ENCODE measurements at regions of chr11 and their contacts with region 1.

Region 1: GRCh38 chr11:58513747-58514367 is 6.0 kb upstream of the OR5B21 start:
- DNase-seq: peak; percentile 51
- ATAC-seq: peak; percentile 87
- H3K4me3 ChIP-seq: no peak overlapping the region
- H3K27ac ChIP-seq: no peak overlapping the region
- H3K4me1 ChIP-seq: peaks cover 12% of the 10 kb centered on the region
- H3K27me3 ChIP-seq: peaks cover 0 to 5% of the 10 kb centered on the region in 2 experiments; a peak in 1 of 5 replicates
- CTCF ChIP-seq: peak; percentile 82
- EP300 ChIP-seq: no peak
- POLR2A ChIP-seq: no peak
- RAD21 ChIP-seq: peak; percentile 37; the same call in 1 of the 2 replicates

Region 2: DNA sequence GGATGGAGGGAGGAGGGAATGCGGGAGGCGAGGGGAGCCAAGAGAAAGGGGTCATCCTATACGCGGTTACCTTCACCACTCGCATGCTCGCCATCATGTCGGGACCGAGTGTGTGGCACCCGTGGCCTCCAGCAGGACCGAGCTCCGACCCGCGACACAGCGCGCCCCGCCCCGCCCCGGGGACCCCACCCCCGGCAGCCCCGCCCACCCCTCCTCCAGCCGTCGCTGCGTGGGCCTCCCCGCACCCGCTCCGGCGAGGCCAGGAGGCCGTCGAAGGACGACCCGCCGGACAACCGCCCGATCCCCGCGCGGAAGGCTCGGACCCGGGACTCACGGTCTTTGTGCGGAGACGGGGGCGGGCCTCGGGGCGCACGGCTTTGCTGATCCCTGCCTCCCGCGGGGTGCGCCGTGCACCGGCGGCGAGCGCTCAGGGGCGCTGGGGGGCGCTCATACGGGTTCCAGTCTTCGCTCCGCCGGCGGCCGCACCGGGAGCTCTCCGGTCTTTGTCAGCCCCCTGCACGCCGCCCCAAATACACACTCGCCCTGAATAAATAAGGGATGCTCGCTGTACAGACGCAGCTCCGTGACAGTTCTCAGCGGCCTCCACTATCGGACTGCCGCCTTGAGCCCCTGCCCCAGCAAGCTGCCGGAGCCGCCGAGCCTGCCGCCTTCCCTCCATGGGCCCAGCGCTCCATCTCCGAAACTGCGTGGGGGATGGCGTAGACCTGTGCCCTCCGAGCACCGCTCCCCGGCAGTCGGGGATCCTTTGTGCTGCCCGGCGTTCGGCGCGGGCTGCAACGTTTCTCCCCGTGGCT is 946.1 kb before region 1 on chr11 and contains the start of gene UBE2L6:
- CTCF ChIA-PET with region 1: no interaction called
- POLR2A ChIA-PET with region 1: no interaction called
- in situ Hi-C with region 1: loop called (anchors 10 kb)
- intact Hi-C with region 1: no loop called
- DNase-seq: no peak
- ATAC-seq: peak; percentile 89
- H3K4me3 ChIP-seq: peak within 1 kb of the TSS; percentile 82 to 98 (median 84)
- H3K27ac ChIP-seq: peak within 1 kb of the TSS; percentile 40
- H3K4me1 ChIP-seq: peaks cover 24% of the 10 kb centered on the region
- H3K27me3 ChIP-seq: no peaks in the 10 kb centered on the region; a peak in 1 of 5 replicates
- CTCF ChIP-seq: peak; percentile 95; the same call in 1 of the 2 replicates
- EP300 ChIP-seq: no peak
- POLR2A ChIP-seq: peak in 1 of 2 experiments; percentile 55; a peak in 1 of 4 replicates
- RAD21 ChIP-seq: no peak; the same call in 1 of the 2 replicates
- total RNA-seq, gene UBE2L6: 30.3 and 37.6 TPM in 2 replicates

Region 3: GRCh38 chr11:58059007-58059350 is 454.9 kb before region 1 on chr11:
- CTCF ChIA-PET with region 1: no interaction called
- POLR2A ChIA-PET with region 1: no interaction called
- in situ Hi-C with region 1: no loop called
- intact Hi-C with region 1: loop called (anchors 10 kb)
- DNase-seq: peak; percentile 82
- ATAC-seq: peak; percentile 32
- H3K4me3 ChIP-seq: no peak overlapping the region
- H3K27ac ChIP-seq: peak overlapping the region; percentile 42
- H3K4me1 ChIP-seq: peaks cover 82% of the 10 kb centered on the region
- H3K27me3 ChIP-seq: no peaks in the 10 kb centered on the region
- CTCF ChIP-seq: no peak
- EP300 ChIP-seq: no peak
- POLR2A ChIP-seq: no peak
- RAD21 ChIP-seq: no peak

Region 4: GRCh38 chr11:58301576-58301975 is 212.3 kb before region 1 on chr11:
- CTCF ChIA-PET with region 1: no interaction called
- POLR2A ChIA-PET with region 1: no interaction called
- in situ Hi-C with region 1: no loop called
- intact Hi-C with region 1: no loop called
- DNase-seq: no peak
- ATAC-seq: no peak
- H3K4me3 ChIP-seq: no peak overlapping the region
- H3K27ac ChIP-seq: no peak overlapping the region
- H3K4me1 ChIP-seq: no peaks in the 10 kb centered on the region
- H3K27me3 ChIP-seq: no peaks in the 10 kb centered on the region
- CTCF ChIP-seq: no peak
- EP300 ChIP-seq: no peak
- POLR2A ChIP-seq: no peak
- RAD21 ChIP-seq: no peak

Region 5: GRCh38 chr11:58394195-58394594 is 119.7 kb before region 1 on chr11:
- CTCF ChIA-PET with region 1: no interaction called
- POLR2A ChIA-PET with region 1: no interaction called
- in situ Hi-C with region 1: no loop called
- intact Hi-C with region 1: loop called (anchors 10 kb)
- DNase-seq: peak; percentile 62
- ATAC-seq: no peak
- H3K4me3 ChIP-seq: no peak overlapping the region
- H3K27ac ChIP-seq: no peak overlapping the region
- H3K4me1 ChIP-seq: no peaks in the 10 kb centered on the region
- H3K27me3 ChIP-seq: no peaks in the 10 kb centered on the region
- CTCF ChIP-seq: no peak
- EP300 ChIP-seq: no peak
- POLR2A ChIP-seq: no peak
- RAD21 ChIP-seq: no peak

Measured in HepG2 (cell line).